ENCODE measurements at regions of chr10 and their contacts with region 1.

Region 1: GRCh38 chr10:114470956-114471905 is 66.9 kb upstream of the AFAP1L2 start:
- DNase-seq: peak; percentile 51 to 88 (median 71)

Region 2: GRCh38 chr10:114304017-114304570 is 167.1 kb before region 1 on chr10:
- intact Hi-C with region 1: loop called (anchors 10 kb)
- DNase-seq: peak; percentile 55 to 94 (median 86)

Measured in head of caudate nucleus (tissue), 42 donors.